ENCODE measurements at regions of chr3 and their contacts with region 1.

Region 1: DNA sequence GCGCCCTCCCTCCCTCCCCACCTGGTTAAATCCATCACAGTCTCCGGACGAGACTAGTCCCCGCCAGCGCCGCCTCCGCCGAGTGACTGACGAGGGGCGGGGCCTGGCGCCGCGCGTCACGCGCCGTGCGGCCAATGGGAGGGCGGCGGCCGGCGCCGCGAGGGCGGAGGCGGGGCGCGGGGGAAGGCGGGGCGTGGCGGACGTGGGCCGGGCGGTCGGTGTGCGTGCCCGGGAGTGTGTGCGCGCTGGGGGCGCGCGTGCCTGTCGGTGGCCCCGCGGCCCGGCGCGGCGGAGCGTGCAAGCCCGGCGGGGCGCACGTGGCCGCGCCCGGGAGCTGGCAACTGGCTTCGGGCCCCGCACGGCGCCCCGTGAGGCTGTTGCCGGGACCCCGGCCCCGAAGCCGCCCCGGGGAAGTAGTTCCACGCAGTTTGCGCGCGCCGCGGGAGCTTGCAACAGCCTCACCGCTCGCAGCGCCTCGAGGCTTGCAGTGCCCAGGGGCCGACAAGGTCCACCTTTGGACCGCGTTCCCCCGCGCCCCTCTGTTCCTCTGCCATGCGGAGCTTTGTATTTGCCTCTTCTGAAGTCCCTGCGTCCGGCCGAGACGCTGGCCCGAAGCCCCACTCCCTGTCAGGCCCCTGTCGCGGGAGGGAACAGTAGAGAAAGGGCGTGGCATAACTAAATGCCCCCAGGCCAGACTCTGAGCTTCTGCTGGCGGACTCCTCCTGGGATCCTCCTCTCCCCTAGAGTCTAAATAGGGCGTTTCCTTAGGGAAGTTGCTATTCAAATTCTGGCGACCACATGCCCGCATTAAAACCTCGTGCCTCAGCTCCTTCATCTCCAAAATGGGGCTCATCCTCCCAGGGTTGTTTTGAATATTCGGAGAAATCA is 400.9 kb downstream of the SHQ1 start:
- DNase-seq: peak; percentile 84
- H3K4me3 ChIP-seq: peak overlapping the region; percentile 58
- H3K27ac ChIP-seq: no peak overlapping the region
- H3K4me1 ChIP-seq: no peaks in the 10 kb centered on the region
- H3K27me3 ChIP-seq: no peaks in the 10 kb centered on the region
- CTCF ChIP-seq: no peak

Region 2: GRCh38 chr3:71310359-71310979 is 1136.8 kb before region 1 on chr3:
- CTCF ChIA-PET with region 1: no interaction called
- POLR2A ChIA-PET with region 1: no interaction called
- intact Hi-C with region 1: no loop called
- DNase-seq: peak; percentile 17
- H3K4me3 ChIP-seq: no peak overlapping the region
- H3K27ac ChIP-seq: no peak overlapping the region
- H3K4me1 ChIP-seq: peaks cover 11% of the 10 kb centered on the region
- H3K27me3 ChIP-seq: no peaks in the 10 kb centered on the region
- CTCF ChIP-seq: no peak

Region 3: GRCh38 chr3:71949442-71949841 is 497.9 kb before region 1 on chr3:
- CTCF ChIA-PET with region 1: no interaction called
- POLR2A ChIA-PET with region 1: no interaction called
- intact Hi-C with region 1: no loop called
- DNase-seq: peak; percentile 22
- H3K4me3 ChIP-seq: no peak overlapping the region
- H3K27ac ChIP-seq: no peak overlapping the region
- H3K4me1 ChIP-seq: no peaks in the 10 kb centered on the region
- H3K27me3 ChIP-seq: no peaks in the 10 kb centered on the region
- CTCF ChIP-seq: no peak

Region 4: DNA sequence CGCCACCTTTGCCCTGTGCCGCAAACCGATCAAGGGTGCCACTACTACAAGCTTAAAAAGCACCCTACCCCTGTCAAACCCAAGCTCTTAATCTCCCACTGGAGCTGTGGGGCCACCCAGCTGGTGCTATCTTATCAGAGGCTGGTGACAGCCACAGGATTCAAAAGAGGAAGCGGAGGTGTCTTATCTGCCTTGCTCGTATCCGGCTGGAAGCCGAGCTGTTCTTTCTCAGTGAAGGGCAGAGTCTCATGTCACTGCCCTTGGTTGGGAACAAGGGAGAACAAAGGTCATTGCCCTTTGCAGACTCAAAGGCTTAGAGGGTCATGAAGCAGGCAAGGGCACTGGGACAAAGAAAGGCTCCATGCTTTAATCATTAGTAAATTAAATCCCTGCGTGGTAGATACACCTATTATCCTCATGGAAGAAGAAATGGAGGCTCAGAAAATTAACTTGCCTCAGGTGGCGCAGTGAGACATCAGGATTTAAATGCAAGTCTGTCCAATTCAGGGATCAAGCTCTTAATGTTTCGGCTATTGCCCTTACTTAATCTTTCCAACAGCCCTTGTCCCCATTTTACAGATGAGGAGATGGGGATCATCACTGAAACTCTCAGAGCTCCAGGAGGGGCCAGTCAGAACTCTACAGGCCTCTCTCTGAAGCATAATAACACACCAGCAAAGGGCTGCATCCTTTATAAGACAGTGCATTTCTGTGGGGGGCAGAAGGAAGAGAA is 302.4 kb before region 1 on chr3:
- CTCF ChIA-PET with region 1: no interaction called
- POLR2A ChIA-PET with region 1: interaction called, 11 read pairs
- intact Hi-C with region 1: no loop called
- DNase-seq: no peak
- H3K4me3 ChIP-seq: no peak overlapping the region
- H3K27ac ChIP-seq: no peak overlapping the region
- H3K4me1 ChIP-seq: no peaks in the 10 kb centered on the region
- H3K27me3 ChIP-seq: no peaks in the 10 kb centered on the region
- CTCF ChIP-seq: no peak

Measured in A673 (cell line).